B cell (primary cell): ENCODE measurements at regions of chr7 and their contacts with region 1.

Region 1: GRCh38 chr7:107743567-107744344 is at the start of gene CBLL1:
- DNase-seq: peak; percentile 97
- ATAC-seq: peak; percentile 89
- H3K4me3 ChIP-seq: peak within 1 kb of the TSS; percentile 66 to 90 (median 89)
- H3K4me3 Mint-ChIP-seq: peak within 1 kb of the TSS; percentile 99
- H3K27ac ChIP-seq: peak within 1 kb of the TSS; percentile 97
- H3K27ac Mint-ChIP-seq: peak within 1 kb of the TSS; percentile 100
- H3K4me1 ChIP-seq: peaks cover 26 to 30% of the 10 kb centered on the region in 2 donors
- H3K4me1 Mint-ChIP-seq: peaks cover 45% of the 10 kb centered on the region
- H3K27me3 ChIP-seq: no peaks in the 10 kb centered on the region
- H3K27me3 Mint-ChIP-seq: no peaks in the 10 kb centered on the region
- CTCF ChIP-seq: peak; percentile 67
- total RNA-seq, gene CBLL1: 49.9 and 57.2 TPM in 2 replicates

Region 2: GRCh38 chr7:107044347-107045194 is 699.2 kb before region 1 on chr7 and contains the start of gene PRKAR2B:
- CTCF ChIA-PET with region 1: no interaction called
- POLR2A ChIA-PET with region 1: no interaction called
- intact Hi-C with region 1: loop called (anchors 10 kb)
- DNase-seq: peak; percentile 86
- ATAC-seq: peak; percentile 94
- H3K4me3 ChIP-seq: peak within 1 kb of the TSS; percentile 41 to 69 (median 53)
- H3K4me3 Mint-ChIP-seq: peak within 1 kb of the TSS; percentile 92
- H3K27ac ChIP-seq: no peak within 1 kb of the TSS
- H3K27ac Mint-ChIP-seq: peak within 1 kb of the TSS; percentile 69
- H3K4me1 ChIP-seq: peaks cover 7 to 13% of the 10 kb centered on the region in 2 donors
- H3K4me1 Mint-ChIP-seq: peaks cover 13% of the 10 kb centered on the region
- H3K27me3 ChIP-seq: peaks cover 0 to 26% (median 24%) of the 10 kb centered on the region in 4 experiments
- H3K27me3 Mint-ChIP-seq: peaks cover 37% of the 10 kb centered on the region
- CTCF ChIP-seq: no peak
- total RNA-seq, gene PRKAR2B: 0.39 and 0.81 TPM in 2 replicates

Region 3: GRCh38 chr7:107563775-107564552 is 179.8 kb before region 1 on chr7 and contains the starts of genes COG5 and DUS4L:
- CTCF ChIA-PET with region 1: interaction called, 4 read pairs
- POLR2A ChIA-PET with region 1: interaction called, 6 read pairs
- intact Hi-C with region 1: loop called (anchors 1 kb)
- DNase-seq: peak; percentile 92
- ATAC-seq: peak; percentile 93
- H3K4me3 ChIP-seq: peak within 1 kb of the TSS; percentile 86 to 98 (median 93)
- H3K4me3 Mint-ChIP-seq: peak within 1 kb of the TSS; percentile 88
- H3K27ac ChIP-seq: peak within 1 kb of the TSS; percentile 88 to 94
- H3K27ac Mint-ChIP-seq: peak within 1 kb of the TSS; percentile 94
- H3K4me1 ChIP-seq: peaks cover 18 to 23% of the 10 kb centered on the region in 2 donors
- H3K4me1 Mint-ChIP-seq: peaks cover 50% of the 10 kb centered on the region
- H3K27me3 ChIP-seq: no peaks in the 10 kb centered on the region
- H3K27me3 Mint-ChIP-seq: no peaks in the 10 kb centered on the region
- CTCF ChIP-seq: no peak
- total RNA-seq, gene COG5: 73.0 and 74.8 TPM in 2 replicates
- total RNA-seq, gene DUS4L: 17.6 and 18.7 TPM in 2 replicates

Region 4: DNA sequence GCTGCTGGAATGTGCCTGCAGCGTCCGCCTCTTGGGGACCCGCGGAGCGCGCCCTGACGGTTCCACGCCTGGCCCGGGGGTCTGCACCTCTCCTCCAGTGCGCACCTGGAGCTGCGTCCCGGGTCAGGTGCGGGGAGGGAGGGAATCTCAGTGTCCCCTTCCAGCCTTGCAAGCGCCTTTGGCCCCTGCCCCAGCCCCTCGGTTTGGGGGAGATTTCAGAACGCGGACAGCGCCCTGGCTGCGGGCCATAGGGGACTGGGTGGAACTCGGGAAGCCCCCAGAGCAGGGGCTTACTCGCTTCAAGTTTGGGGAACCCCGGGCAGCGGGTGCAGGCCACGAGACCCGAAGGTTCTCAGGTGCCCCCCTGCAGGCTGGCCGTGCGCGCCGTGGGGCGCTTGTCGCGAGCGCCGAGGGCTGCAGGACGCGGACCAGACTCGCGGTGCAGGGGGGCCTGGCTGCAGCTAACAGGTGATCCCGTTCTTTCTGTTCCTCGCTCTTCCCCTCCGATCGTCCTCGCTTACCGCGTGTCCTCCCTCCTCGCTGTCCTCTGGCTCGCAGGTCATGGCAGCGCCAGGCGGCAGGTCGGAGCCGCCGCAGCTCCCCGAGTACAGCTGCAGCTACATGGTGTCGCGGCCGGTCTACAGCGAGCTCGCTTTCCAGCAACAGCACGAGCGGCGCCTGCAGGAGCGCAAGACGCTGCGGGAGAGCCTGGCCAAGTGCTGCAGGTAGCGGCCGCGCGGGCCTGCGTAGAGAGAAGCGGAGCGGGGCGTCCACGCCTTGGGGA is 82.5 kb before region 1 on chr7:
- CTCF ChIA-PET with region 1: interaction called, 6 read pairs
- POLR2A ChIA-PET with region 1: no interaction called
- intact Hi-C with region 1: loop called (anchors 5 kb)
- DNase-seq: peak; percentile 73
- ATAC-seq: peak; percentile 60
- H3K4me3 ChIP-seq: peak overlapping the region; percentile 41 to 72 (median 61)
- H3K4me3 Mint-ChIP-seq: peak overlapping the region; percentile 99
- H3K27ac ChIP-seq: no peak overlapping the region
- H3K27ac Mint-ChIP-seq: peak overlapping the region; percentile 72
- H3K4me1 ChIP-seq: peaks cover 25 to 26% of the 10 kb centered on the region in 2 donors
- H3K4me1 Mint-ChIP-seq: peaks cover 26% of the 10 kb centered on the region
- H3K27me3 ChIP-seq: peaks cover 0 to 28% (median 16%) of the 10 kb centered on the region in 4 experiments
- H3K27me3 Mint-ChIP-seq: peaks cover 30% of the 10 kb centered on the region
- CTCF ChIP-seq: no peak

Region 5: DNA sequence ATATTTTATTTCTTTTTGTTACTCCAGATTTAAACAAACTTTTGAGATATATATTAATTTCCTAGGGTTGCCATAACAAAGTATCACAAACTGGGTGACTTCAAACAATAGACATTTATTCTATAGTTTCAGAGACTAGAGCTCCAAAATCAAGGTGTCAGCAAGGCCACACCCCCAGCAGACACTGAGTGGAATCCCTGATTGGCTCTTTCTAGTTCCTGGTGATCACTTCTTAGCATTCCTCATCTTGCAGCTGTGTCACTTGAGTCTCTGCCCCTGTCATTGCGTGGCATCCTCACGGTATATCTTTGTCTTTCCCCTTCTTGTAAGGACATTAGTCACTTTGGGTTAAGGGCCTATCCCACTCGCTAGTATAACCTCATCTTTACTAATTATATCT is 66.9 kb after region 1 on chr7:
- CTCF ChIA-PET with region 1: no interaction called
- POLR2A ChIA-PET with region 1: no interaction called
- intact Hi-C with region 1: no loop called
- DNase-seq: no peak
- ATAC-seq: no peak
- H3K4me3 ChIP-seq: no peak overlapping the region
- H3K4me3 Mint-ChIP-seq: no peak overlapping the region
- H3K27ac ChIP-seq: no peak overlapping the region
- H3K27ac Mint-ChIP-seq: no peak overlapping the region
- H3K4me1 ChIP-seq: no peaks in the 10 kb centered on the region
- H3K4me1 Mint-ChIP-seq: no peaks in the 10 kb centered on the region
- H3K27me3 ChIP-seq: no peaks in the 10 kb centered on the region
- H3K27me3 Mint-ChIP-seq: peaks cover 7% of the 10 kb centered on the region
- CTCF ChIP-seq: no peak

Region 6: GRCh38 chr7:108135446-108136190 is 391.9 kb after region 1 on chr7:
- CTCF ChIA-PET with region 1: no interaction called
- POLR2A ChIA-PET with region 1: no interaction called
- intact Hi-C with region 1: loop called (anchors 5 kb)
- DNase-seq: peak; percentile 70
- ATAC-seq: peak; percentile 92
- H3K4me3 ChIP-seq: peak overlapping the region in 1 of 5 experiments; percentile 14
- H3K4me3 Mint-ChIP-seq: peak overlapping the region; percentile 64
- H3K27ac ChIP-seq: peak overlapping the region; percentile 74 to 81
- H3K27ac Mint-ChIP-seq: peak overlapping the region; percentile 94
- H3K4me1 ChIP-seq: peaks cover 29 to 32% of the 10 kb centered on the region in 2 donors
- H3K4me1 Mint-ChIP-seq: peaks cover 24% of the 10 kb centered on the region
- H3K27me3 ChIP-seq: no peaks in the 10 kb centered on the region
- H3K27me3 Mint-ChIP-seq: no peaks in the 10 kb centered on the region
- CTCF ChIP-seq: no peak